CD4-positive, alpha-beta T cell (primary cell): ENCODE measurements at regions of chr5 and their contacts with region 1.

Region 1: DNA sequence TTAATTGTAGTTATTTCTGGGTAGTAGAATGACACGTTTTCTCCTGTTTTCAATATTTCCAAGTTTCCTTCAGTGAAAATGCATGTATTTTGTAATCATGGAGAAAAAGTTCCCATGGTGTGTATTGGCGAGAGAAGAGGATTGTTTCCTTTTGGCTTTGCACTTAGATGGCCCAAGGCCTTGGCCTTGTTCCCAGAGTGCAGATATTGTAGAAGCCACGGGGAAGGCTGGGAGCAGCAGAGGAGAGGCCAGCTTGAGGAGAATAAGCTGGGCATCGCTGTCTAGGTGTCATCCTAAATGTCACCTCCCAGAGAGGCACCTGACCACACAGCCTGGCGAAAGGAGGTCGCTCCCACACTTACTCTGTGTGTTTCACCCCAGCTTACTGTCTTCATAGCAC is 43.9 kb downstream of the IRF1 start:
- DNase-seq: no peak
- ATAC-seq: no peak
- H3K4me3 ChIP-seq: peak overlapping the region; percentile 19
- H3K4me3 Mint-ChIP-seq: peak overlapping the region; percentile 39
- H3K27ac ChIP-seq: peak overlapping the region in 1 of 2 donors; percentile 23
- H3K27ac Mint-ChIP-seq: peak overlapping the region; percentile 82
- H3K4me1 ChIP-seq: peaks cover 74% of the 10 kb centered on the region
- H3K4me1 Mint-ChIP-seq: peaks cover 67% of the 10 kb centered on the region
- H3K27me3 ChIP-seq: no peaks in the 10 kb centered on the region
- H3K27me3 Mint-ChIP-seq: no peaks in the 10 kb centered on the region
- CTCF ChIP-seq: no peak

Region 2: GRCh38 chr5:132473019-132473531 is 26.4 kb after region 1 on chr5:
- CTCF ChIA-PET with region 1: interaction called, 3 read pairs
- POLR2A ChIA-PET with region 1: interaction called, 25 read pairs
- intact Hi-C with region 1: no loop called
- DNase-seq: peak; percentile 73 to 96 (median 81)
- ATAC-seq: peak; percentile 68
- H3K4me3 ChIP-seq: no peak overlapping the region
- H3K4me3 Mint-ChIP-seq: peak overlapping the region; percentile 74
- H3K27ac ChIP-seq: peak overlapping the region; percentile 70 to 77
- H3K27ac Mint-ChIP-seq: peak overlapping the region; percentile 97
- H3K4me1 ChIP-seq: peaks cover 92% of the 10 kb centered on the region
- H3K4me1 Mint-ChIP-seq: peaks cover 96% of the 10 kb centered on the region
- H3K27me3 ChIP-seq: no peaks in the 10 kb centered on the region
- H3K27me3 Mint-ChIP-seq: peaks cover 10% of the 10 kb centered on the region
- CTCF ChIP-seq: no peak

Region 3: GRCh38 chr5:132479111-132479951 is 32.7 kb after region 1 on chr5:
- CTCF ChIA-PET with region 1: no interaction called
- POLR2A ChIA-PET with region 1: interaction called, 25 read pairs
- intact Hi-C with region 1: no loop called
- DNase-seq: peak in 2 of 14 experiments; percentile 2 to 40
- ATAC-seq: no peak
- H3K4me3 ChIP-seq: no peak overlapping the region
- H3K4me3 Mint-ChIP-seq: peak overlapping the region; percentile 67
- H3K27ac ChIP-seq: peak overlapping the region; percentile 1 to 60
- H3K27ac Mint-ChIP-seq: peak overlapping the region; percentile 97
- H3K4me1 ChIP-seq: peaks cover 89% of the 10 kb centered on the region
- H3K4me1 Mint-ChIP-seq: peaks cover 86% of the 10 kb centered on the region
- H3K27me3 ChIP-seq: no peaks in the 10 kb centered on the region
- H3K27me3 Mint-ChIP-seq: peaks cover 24% of the 10 kb centered on the region
- CTCF ChIP-seq: no peak